ENCODE measurements at regions of chr2 and their contacts with region 1.

Region 1: DNA sequence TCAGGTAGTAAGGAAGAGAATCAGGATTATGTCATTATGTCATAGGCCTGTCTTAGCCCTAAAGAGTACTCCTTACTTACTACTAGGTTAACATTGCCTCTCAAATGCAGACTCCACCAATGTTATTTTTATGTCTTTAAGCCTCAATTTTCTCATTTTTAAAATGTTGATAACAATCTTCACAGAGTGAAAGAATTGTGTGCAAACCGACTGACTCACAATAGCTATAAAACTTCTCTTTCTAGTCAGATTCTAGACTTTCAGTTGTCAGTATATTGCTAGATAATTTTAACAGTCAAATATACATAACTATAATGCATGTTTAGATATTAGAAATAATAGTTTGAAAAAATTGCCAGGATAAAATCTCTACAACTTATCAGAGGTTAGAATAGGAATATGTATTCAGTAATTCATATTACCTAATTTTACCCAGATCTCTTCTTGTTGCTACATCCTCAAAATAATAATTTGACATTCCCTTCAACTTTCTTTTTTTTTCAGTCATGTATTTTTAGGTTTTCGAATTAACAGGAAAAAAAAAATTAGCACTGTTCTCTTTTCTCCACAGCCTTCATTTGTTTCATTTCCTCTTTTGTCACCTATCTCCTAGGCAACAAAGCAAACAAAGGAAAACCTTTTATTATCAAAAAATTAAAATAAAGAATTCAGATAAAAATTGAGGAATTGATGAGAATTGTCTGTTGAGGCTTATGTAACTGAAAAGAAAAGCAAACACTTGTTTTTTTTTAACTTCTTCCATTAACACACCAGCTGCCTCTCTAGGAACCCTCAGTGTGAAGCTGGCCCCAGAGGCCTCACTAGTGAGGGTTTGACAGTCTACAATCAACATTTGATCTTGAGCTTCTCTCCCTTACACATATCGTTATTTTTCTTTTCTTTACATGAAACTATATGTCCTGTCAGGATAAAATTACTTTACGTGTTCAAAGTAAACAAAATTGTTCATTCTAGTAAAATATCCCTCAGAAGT is 279.0 kb downstream of the CALCRL start:
- DNase-seq: no peak

Region 2: GRCh38 chr2:186903216-186903615 is 265.8 kb before region 1 on chr2:
- in situ Hi-C with region 1: loop called (anchors 25 kb)
- DNase-seq: peak; percentile 43